GM13977 (cell line): ENCODE measurements at regions of chr7 and their contacts with region 1.

Region 1: DNA sequence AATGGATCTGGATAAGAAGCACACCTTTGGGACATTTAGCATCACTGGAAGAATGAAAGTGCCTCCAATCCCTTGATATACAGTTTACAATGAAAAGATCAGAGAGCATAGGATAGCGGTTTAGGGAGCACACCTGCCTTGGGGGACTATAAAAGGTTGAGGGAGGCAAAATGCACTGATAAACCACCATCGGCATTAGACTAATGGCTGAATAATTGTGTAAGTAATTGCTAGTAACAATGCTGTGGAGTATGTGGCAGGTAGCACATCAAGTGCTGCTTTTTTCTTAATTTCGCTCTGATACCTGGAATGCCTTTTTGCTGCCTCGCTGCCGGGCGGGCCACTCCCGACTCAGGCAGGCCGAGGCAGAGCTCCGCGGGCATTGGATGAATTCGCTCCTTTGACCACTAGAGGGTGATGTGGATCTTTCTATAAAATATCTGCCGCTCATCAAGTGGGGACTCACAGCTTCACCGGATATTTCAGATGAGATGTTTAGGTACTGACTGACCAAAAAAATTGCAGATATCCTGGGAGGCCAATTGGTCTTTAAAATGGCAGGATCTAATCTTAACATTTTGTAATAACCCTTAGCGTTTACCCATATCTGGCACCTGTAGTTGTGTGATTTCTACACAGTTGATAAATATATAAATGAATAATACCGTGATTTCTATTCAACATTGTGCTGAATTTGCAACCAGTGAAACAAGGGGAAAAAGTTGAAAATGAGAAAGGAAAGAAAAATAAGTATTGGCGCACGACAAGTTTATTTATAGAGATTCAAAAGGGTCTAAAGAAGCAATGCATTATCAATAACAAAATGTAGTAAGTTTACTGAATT is 116.8 kb upstream of the PRSS1 start:
- DNase-seq: peak; percentile 77
- CTCF ChIP-seq: peak; percentile 75

Region 2: DNA sequence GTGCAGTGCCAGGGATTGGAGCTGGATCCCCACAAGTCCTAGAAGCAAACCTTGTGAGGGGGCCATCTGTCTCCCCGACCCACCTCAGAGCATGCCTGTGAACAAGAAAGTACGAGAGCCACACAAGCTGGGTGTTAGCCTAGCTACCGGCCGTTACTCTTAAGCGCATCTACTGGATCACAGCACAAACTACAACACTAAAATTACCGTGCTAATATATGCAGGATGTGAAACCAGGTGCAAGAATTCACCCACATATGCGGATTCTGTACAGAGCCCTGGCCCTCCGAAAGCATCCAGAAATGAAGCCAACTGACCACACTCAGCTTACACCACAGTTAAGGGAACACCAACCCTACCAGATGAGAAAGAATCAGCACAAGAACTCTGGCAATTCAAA is 100.8 kb after region 1 on chr7:
- in situ Hi-C with region 1: no loop called
- DNase-seq: no peak
- CTCF ChIP-seq: no peak

Region 3: DNA sequence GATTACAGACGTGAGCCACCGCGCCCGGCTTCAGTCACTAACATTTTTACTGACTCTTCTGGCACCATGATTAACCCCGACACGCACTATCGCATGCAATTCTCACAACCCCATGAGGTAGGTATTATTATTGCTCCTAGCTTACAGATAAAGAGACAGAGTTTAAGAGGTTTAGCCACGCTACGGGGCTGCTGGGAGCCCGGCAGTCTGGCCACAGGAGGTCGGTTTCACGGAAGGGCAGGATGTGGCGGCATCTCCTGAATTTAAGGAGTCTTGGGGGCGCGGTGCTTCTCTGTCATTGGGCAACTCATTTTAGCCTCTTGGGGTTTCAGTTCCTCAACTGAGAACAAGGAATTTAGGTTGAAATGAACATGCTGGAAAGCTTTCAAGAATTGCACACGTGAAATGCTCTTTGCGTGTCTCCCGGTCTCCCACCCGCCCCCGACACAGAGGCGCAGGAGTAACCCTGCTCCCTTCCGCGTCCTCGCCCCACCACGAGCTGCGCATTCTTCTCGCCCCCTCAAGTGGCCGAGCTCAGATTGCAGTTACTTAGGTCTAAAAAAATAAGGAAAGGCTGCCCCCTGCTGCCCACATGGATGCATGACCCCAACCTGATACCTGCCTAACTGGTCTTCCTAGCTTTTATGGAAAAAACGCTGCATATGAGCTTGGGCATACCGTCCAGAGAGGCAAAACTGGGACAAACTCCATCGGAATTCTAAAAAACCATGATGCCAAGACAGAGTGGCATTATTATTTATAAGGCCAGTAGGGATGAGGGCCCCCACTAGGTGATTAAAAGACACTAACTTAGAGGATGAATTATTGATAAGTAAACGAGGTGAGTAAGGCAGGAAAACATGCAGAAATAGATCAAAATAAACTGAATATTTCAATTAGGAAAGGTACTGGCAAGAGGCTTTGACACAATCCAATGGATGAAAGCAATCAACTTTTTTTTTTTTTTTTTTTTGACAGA is 150.7 kb after region 1 on chr7:
- in situ Hi-C with region 1: loop called (anchors 10 kb)
- DNase-seq: peak; percentile 82
- CTCF ChIP-seq: peak; percentile 96

Region 4: GRCh38 chr7:142898377-142899170 is 266.1 kb after region 1 on chr7:
- in situ Hi-C with region 1: no loop called
- DNase-seq: no peak
- CTCF ChIP-seq: no peak

Region 5: DNA sequence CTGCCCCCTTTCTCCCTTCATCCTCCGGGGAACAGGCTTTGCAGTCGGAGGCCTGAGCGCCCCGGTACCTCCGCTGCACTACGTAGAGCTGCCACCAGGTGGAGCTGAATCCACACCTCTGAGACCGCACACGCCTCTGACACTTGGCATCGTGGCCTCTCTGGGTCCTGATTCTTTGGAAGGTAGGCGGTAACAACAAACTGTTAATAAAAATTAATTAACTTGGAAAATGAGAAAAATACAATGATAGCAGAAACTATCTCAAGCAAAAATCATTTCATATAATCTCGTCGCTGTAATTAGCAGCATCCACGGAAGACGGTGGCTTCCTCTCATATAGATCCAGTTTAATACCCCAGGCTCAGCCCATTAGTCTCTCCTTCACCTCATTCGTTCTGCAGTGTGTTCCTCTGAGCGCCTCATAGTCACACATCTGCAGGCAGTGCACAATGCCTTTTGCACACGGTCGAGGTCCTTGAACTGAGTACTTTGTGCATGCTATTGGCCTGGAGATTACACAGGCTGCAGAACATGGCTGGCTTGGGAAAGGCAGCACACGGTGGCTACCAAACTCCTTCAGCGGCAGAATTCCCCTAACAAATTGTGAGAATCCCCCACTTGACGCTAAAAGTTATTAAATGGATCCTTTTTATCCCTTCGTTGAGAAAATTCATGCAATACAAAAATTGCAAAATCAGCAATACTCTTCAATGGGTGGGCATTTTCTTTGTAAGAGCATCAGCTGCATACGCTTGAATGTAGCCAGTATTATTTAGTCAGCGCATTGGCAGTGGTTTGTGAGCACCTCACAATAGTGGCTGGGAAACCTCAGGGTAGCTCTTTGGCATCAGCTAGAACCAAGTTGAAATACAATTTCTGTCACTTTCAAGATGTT is 375.7 kb after region 1 on chr7:
- in situ Hi-C with region 1: loop called (anchors 25 kb)
- DNase-seq: peak; percentile 56
- CTCF ChIP-seq: peak; percentile 98